CD4-positive, alpha-beta T cell (primary cell): ENCODE measurements at regions of chr7 and their contacts with region 1.

Region 1: GRCh38 chr7:137934941-137935883 is 66.7 kb downstream of the CREB3L2 start:
- DNase-seq: peak in 3 of 14 experiments; percentile 46 to 62 (median 53)
- ATAC-seq: peak; percentile 83
- H3K4me3 ChIP-seq: peak overlapping the region; percentile 50
- H3K4me3 Mint-ChIP-seq: peak overlapping the region; percentile 83
- H3K27ac ChIP-seq: peak overlapping the region; percentile 61 to 83
- H3K27ac Mint-ChIP-seq: peak overlapping the region; percentile 86
- H3K4me1 ChIP-seq: peaks cover 43% of the 10 kb centered on the region
- H3K4me1 Mint-ChIP-seq: peaks cover 54% of the 10 kb centered on the region
- H3K27me3 ChIP-seq: no peaks in the 10 kb centered on the region
- H3K27me3 Mint-ChIP-seq: no peaks in the 10 kb centered on the region
- CTCF ChIP-seq: no peak

Region 2: DNA sequence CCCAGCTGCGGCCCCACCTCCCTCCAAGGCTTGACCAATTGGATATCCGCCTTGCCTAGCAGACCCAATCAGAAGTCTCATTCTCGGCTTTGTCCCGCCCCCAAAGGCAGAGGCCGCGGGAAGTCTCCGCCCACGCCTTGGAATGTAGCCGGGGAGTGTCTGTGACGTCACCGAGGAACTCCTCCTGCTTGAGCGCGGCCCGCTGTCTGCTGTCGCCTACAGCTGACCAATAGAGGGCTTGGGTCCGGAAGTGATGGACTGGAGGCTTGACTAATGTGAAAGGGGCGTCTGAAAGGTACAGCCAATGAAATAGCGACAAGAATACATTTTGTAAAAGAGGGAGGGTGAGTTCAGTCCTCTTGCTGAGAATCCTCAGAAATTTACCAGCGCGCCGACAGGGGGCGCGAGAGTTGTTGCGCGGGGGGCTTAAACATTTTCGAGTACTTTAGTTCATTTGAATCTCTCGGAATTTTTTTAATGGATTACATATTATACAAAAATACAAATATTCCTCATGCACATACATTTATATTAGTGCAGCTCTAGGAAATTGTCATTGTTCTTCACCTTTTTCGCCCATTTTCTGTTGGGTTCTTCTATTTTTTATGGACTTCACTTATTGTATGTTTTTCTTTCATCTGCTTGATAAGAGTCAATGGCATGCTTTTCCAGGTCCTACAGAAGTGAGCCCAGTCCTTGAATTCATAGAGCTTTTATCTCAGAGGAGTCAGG is 67.0 kb after region 1 on chr7:
- CTCF ChIA-PET with region 1: interaction called, 6 read pairs
- POLR2A ChIA-PET with region 1: interaction called, 35 read pairs
- intact Hi-C with region 1: loop called in 1 of 2 experiments (anchors 1 kb)
- DNase-seq: peak; percentile 95 to 100 (median 97)
- ATAC-seq: peak; percentile 87
- H3K4me3 ChIP-seq: peak overlapping the region; percentile 92
- H3K4me3 Mint-ChIP-seq: peak overlapping the region; percentile 93
- H3K27ac ChIP-seq: peak overlapping the region; percentile 67 to 75
- H3K27ac Mint-ChIP-seq: peak overlapping the region; percentile 75
- H3K4me1 ChIP-seq: peaks cover 16% of the 10 kb centered on the region
- H3K4me1 Mint-ChIP-seq: peaks cover 36% of the 10 kb centered on the region
- H3K27me3 ChIP-seq: no peaks in the 10 kb centered on the region
- H3K27me3 Mint-ChIP-seq: no peaks in the 10 kb centered on the region
- CTCF ChIP-seq: peak; percentile 99